ENCODE measurements at regions of chr15 and their contacts with region 1.

Region 1: DNA sequence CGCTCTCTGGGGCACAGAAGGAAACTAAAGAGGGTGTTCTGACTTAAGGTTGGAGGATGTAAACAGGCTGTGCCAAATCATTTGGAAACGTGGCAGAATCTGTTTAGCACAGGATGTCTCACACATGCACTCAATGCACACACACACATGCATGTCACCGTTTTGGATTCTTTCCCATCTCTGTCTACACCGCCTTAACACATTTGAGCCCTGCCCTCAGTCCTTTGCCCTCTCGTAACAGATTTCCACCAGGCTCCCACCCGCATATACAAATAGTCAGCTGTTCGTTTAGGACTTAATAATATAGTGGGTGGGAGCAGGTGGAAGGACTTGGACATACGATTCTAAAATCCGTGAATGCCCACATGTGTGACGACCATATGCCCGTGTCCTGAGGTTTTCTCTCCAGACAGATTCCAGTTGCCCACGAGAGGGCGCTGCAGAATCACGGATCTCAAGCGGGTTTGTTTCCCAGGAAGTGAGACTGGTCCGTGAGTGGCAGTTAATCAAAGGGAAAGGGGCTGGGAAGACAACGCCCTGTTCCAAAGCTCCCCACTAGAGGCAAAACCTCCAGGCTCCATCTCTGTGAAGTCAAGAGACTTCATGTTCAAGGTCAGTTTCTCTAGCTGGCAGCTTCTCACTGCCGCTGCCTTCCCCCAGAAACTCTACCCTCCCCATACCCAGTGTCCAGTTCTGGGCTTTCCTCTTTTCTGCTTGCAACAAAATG is 44.5 kb downstream of the NOX5 start:
- DNase-seq: peak; percentile 93
- ATAC-seq: peak; percentile 86

Region 2: DNA sequence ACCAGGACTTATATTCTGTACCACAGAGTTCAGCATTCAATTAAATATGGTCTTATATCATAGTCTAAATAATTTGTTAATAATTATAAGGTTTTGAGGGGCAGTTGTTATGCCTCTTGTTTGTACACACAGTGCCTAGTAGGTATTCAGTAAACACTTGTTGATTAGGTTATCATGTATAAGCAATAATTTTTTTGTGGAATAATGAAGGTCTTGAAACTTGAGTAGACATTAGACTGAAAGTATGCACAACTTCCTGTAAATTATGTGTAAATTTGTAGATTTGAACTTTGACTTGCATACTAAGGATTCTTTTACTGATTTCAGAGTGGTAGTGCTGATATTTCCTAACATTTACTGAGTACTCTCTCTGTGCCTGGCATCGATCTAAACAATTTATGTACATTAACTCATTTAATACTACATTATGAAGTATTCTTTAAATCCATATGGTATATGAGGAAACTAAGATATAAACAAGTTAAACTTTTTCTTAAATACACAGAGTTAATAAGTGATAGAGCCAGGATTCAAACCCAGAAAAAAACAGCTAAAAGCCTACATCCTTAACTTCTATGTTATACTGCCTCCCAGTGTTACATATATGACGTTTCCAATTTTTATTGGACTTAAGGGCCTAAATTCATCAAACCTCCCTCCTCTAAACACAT is 166.5 kb after region 1 on chr15:
- intact Hi-C with region 1: loop called (anchors 10 kb)
- DNase-seq: no peak
- ATAC-seq: peak; percentile 35

Region 3: GRCh38 chr15:69265347-69265955 is 206.5 kb after region 1 on chr15:
- intact Hi-C with region 1: loop called (anchors 5 kb)
- DNase-seq: no peak
- ATAC-seq: no peak

Region 4: GRCh38 chr15:69394556-69395282 is 335.7 kb after region 1 on chr15:
- intact Hi-C with region 1: loop called (anchors 5 kb)
- DNase-seq: peak; percentile 89
- ATAC-seq: peak; percentile 93

Measured in left ventricle myocardium superior (tissue), 1 donor.